GM12878 (cell line): ENCODE measurements at regions of chr1 and their contacts with region 1.

Region 1: DNA sequence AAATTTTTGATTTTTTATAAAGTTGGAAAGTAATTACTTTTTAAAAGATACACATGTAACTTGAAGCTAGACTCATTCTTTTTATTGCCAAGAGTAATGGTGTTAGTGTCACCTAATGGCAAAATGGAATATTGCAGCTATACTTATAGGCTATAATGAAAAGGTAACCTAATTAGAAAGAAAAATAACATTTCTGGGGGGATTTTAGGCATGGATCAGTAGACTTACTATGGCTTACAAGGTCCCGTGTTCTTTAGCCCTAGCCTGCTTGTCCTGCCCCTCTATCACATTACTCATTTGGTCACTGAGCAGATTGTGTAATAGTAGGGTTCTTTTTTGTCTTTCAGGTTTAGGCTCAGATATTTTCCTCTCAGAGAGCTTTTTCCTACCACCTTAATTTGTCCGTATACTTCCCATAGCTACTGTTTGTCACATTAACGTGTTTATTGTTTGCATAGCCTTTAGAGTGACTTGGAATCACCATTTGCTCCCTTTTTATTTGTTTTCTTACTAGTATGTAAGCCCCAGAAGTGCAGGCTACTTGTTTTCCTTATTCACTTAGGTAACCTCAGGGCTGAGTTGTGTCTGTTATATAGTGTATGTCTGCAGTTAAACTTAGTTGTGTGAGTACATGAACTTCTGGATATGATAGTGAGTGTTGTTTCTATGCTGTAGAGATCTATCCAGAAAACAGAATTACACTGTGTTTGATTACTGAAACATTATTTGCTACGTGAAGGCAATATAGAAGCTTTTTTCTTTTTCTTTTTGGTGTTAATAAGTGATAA is 58.7 kb downstream of the RABGAP1L start:
- DNase-seq: no peak
- ATAC-seq: peak; percentile 79
- H3K4me3 ChIP-seq: no peak overlapping the region
- H3K27ac ChIP-seq: peak overlapping the region; percentile 36
- H3K4me1 ChIP-seq: peaks cover 38% of the 10 kb centered on the region
- H3K27me3 ChIP-seq: no peaks in the 10 kb centered on the region
- CTCF ChIP-seq: peak; percentile 64 to 79 (median 76); a peak in 5 of 6 replicates
- EP300 ChIP-seq: no peak
- POLR2A ChIP-seq: no peak
- RAD21 ChIP-seq: peak; percentile 86

Region 2: DNA sequence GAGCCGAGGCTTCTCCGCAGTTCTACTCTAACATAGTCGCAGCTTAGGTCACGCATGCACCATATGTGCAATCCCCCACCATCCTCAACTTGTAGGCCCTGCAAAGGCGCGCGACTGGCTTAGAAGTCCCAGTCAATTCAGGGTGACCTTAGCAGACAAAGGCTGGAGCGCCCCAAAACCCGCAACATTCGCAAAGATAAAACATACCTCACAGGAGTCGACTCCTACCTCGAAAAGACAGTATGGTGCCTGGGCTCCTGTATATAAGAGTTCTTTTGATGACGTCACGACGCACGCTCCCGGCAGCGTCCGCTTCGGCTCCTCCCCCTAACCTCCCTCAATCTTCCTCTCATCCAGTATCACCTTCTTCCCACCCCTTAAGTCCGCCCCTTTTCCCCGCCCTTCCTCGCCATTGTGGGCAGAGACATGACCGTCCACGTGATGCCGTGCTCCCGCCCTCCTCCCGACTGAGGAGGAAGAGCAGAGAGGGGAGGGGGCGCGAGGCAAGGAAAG is 350.2 kb before region 1 on chr1 and contains the start of gene GAS5:
- CTCF ChIA-PET with region 1: interaction called, 3 read pairs
- POLR2A ChIA-PET with region 1: no interaction called
- RAD21 ChIA-PET with region 1: interaction called, 3 read pairs
- SMC1A ChIA-PET with region 1: no interaction called
- in situ Hi-C with region 1: no loop called
- intact Hi-C with region 1: loop called (anchors 10 kb)
- DNase-seq: peak; percentile 99
- ATAC-seq: peak; percentile 80
- H3K4me3 ChIP-seq: peak within 1 kb of the TSS; percentile 91
- H3K27ac ChIP-seq: peak within 1 kb of the TSS; percentile 89
- H3K4me1 ChIP-seq: peaks cover 18% of the 10 kb centered on the region
- H3K27me3 ChIP-seq: no peaks in the 10 kb centered on the region
- CTCF ChIP-seq: no peak
- EP300 ChIP-seq: no peak
- POLR2A ChIP-seq: peak; percentile 98
- RAD21 ChIP-seq: no peak
- polyA plus RNA-seq, gene GAS5: 804 to 930 TPM

Region 3: GRCh38 chr1:173986951-173987350 is 231.0 kb before region 1 on chr1:
- CTCF ChIA-PET with region 1: no interaction called
- POLR2A ChIA-PET with region 1: no interaction called
- RAD21 ChIA-PET with region 1: no interaction called
- SMC1A ChIA-PET with region 1: no interaction called
- in situ Hi-C with region 1: no loop called
- intact Hi-C with region 1: loop called (anchors 10 kb)
- DNase-seq: no peak
- ATAC-seq: no peak
- H3K4me3 ChIP-seq: no peak overlapping the region
- H3K27ac ChIP-seq: no peak overlapping the region
- H3K4me1 ChIP-seq: no peaks in the 10 kb centered on the region
- H3K27me3 ChIP-seq: no peaks in the 10 kb centered on the region
- CTCF ChIP-seq: no peak
- EP300 ChIP-seq: no peak
- POLR2A ChIP-seq: no peak
- RAD21 ChIP-seq: no peak

Region 4: GRCh38 chr1:174097426-174097825 is 120.6 kb before region 1 on chr1:
- CTCF ChIA-PET with region 1: interaction called, 8 read pairs
- POLR2A ChIA-PET with region 1: no interaction called
- RAD21 ChIA-PET with region 1: no interaction called
- SMC1A ChIA-PET with region 1: interaction called, 3 read pairs
- in situ Hi-C with region 1: loop called (anchors 5 kb)
- intact Hi-C with region 1: loop called (anchors 5 kb)
- DNase-seq: no peak
- ATAC-seq: no peak
- H3K4me3 ChIP-seq: no peak overlapping the region
- H3K27ac ChIP-seq: no peak overlapping the region
- H3K4me1 ChIP-seq: no peaks in the 10 kb centered on the region
- H3K27me3 ChIP-seq: no peaks in the 10 kb centered on the region; a peak in 1 of 4 replicates
- CTCF ChIP-seq: no peak
- EP300 ChIP-seq: no peak
- POLR2A ChIP-seq: no peak
- RAD21 ChIP-seq: no peak

Region 5: GRCh38 chr1:174159252-174160108 is 58.5 kb before region 1 on chr1 and contains the start of gene RABGAP1L:
- CTCF ChIA-PET with region 1: interaction called, 3 read pairs
- POLR2A ChIA-PET with region 1: no interaction called
- RAD21 ChIA-PET with region 1: no interaction called
- SMC1A ChIA-PET with region 1: no interaction called
- in situ Hi-C with region 1: no loop called
- intact Hi-C with region 1: loop called (anchors 5 kb)
- DNase-seq: peak; percentile 55
- ATAC-seq: peak; percentile 84
- H3K4me3 ChIP-seq: peak within 1 kb of the TSS; percentile 91
- H3K27ac ChIP-seq: peak within 1 kb of the TSS; percentile 93
- H3K4me1 ChIP-seq: peaks cover 31% of the 10 kb centered on the region
- H3K27me3 ChIP-seq: no peaks in the 10 kb centered on the region; a peak in 1 of 4 replicates
- CTCF ChIP-seq: no peak
- EP300 ChIP-seq: no peak
- POLR2A ChIP-seq: peak; percentile 96
- RAD21 ChIP-seq: 0 out of 2 replicates have a peak, but pooled peaks have one; percentile 6
- polyA plus RNA-seq, gene RABGAP1L: 92.3 to 130 TPM

Region 6: GRCh38 chr1:174206148-174206836 is 11.7 kb before region 1 on chr1:
- CTCF ChIA-PET with region 1: interaction called, 12 read pairs
- POLR2A ChIA-PET with region 1: interaction called, 5 read pairs
- RAD21 ChIA-PET with region 1: interaction called, 4 read pairs
- SMC1A ChIA-PET with region 1: interaction called, 3 read pairs
- in situ Hi-C with region 1: no loop called
- intact Hi-C with region 1: no loop called
- DNase-seq: no peak
- ATAC-seq: no peak
- H3K4me3 ChIP-seq: peak overlapping the region; percentile 36; the same call in 1 of the 2 replicates
- H3K27ac ChIP-seq: no peak overlapping the region; the same call in 1 of the 2 replicates
- H3K4me1 ChIP-seq: peaks cover 31% of the 10 kb centered on the region
- H3K27me3 ChIP-seq: no peaks in the 10 kb centered on the region
- CTCF ChIP-seq: no peak
- EP300 ChIP-seq: no peak
- POLR2A ChIP-seq: no peak
- RAD21 ChIP-seq: no peak